ENCODE measurements at regions of chr18 and their contacts with region 1.

Region 1: DNA sequence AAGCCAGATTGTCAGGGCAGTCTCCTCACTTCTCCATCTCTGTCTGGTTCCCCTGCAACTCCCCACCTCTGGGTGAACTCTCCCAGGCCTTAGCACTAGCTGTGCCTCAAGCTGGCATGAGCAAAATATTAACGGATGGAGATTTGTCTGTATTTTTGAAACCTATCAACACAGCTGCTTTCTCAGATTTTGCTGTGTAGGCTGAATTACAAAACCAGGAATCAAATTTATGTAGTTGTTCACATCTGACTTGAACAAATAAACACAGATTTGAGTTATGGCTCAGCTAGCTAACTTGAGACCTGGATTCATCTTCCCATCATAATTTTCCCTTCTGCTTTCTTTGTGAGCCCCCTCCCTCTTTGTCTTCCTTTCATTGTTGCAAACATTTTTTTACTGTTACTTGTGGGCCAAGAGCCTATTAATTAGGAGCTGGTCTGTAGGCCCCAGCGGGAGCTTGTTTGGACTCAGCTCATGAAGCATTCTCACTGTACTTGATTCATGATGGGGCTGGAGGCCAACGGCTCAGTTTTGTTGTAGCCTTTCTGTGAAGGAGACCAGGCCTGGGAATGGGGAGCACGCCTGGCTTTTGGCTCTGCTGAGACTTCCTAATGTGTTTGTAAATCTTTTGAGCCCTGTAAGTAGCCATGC is 164.1 kb upstream of the GATA6 start:
- DNase-seq: no peak
- ATAC-seq: peak in 3 of 8 donors; percentile 46 to 69 (median 47)
- H3K4me3 ChIP-seq: no peak overlapping the region
- H3K27ac ChIP-seq: peak overlapping the region in 2 of 10 donors; percentile 37 to 47
- H3K4me1 ChIP-seq: peaks cover 0 to 9% (median under 1%) of the 10 kb centered on the region in 9 donors
- H3K27me3 ChIP-seq: no peaks in the 10 kb centered on the region
- CTCF ChIP-seq: no peak

Region 2: GRCh38 chr18:22084547-22084946 is 79.2 kb after region 1 on chr18:
- intact Hi-C with region 1: loop called in 1 of 10 experiments (anchors 10 kb)
- DNase-seq: peak in 1 of 2 donors; percentile 71
- ATAC-seq: peak; percentile 51 to 88 (median 82)
- H3K4me3 ChIP-seq: no peak overlapping the region
- H3K27ac ChIP-seq: peak overlapping the region in 6 of 10 donors; percentile 23 to 83 (median 80)
- H3K4me1 ChIP-seq: peaks cover 0 to 27% (median 9%) of the 10 kb centered on the region in 9 donors
- H3K27me3 ChIP-seq: no peaks in the 10 kb centered on the region
- CTCF ChIP-seq: no peak

Region 3: DNA sequence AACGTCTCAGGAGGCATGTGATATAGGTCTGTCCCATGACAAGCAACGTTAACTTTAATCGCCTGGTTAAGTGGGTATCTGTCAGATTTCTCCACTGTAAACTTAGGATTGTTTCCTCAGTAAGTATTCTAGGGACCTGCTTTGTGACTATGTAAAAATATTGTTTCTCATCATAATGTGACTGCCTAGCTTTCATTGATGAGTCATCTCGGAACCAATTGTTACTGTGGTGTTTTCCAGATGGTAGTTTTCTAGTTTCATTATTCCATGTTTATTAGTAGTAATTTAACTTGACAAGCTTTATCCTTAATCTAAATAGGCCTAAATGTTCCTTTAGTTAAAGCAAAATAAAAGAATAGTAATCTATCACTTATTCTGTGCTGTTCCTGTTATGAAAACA is 135.9 kb after region 1 on chr18:
- intact Hi-C with region 1: loop called in 1 of 10 experiments (anchors 10 kb)
- DNase-seq: no peak
- ATAC-seq: no peak
- H3K4me3 ChIP-seq: no peak overlapping the region
- H3K27ac ChIP-seq: no peak overlapping the region
- H3K4me1 ChIP-seq: no peaks in the 10 kb centered on the region
- H3K27me3 ChIP-seq: no peaks in the 10 kb centered on the region
- CTCF ChIP-seq: no peak

Region 4: GRCh38 chr18:22152134-22152533 is 146.8 kb after region 1 on chr18:
- intact Hi-C with region 1: loop called in 2 of 10 experiments (anchors 10 kb)
- DNase-seq: no peak
- ATAC-seq: peak in 1 of 8 donors; percentile 31
- H3K4me3 ChIP-seq: no peak overlapping the region
- H3K27ac ChIP-seq: no peak overlapping the region
- H3K4me1 ChIP-seq: no peaks in the 10 kb centered on the region
- H3K27me3 ChIP-seq: no peaks in the 10 kb centered on the region
- CTCF ChIP-seq: no peak

Region 5: GRCh38 chr18:22241921-22242361 is 236.6 kb after region 1 on chr18:
- intact Hi-C with region 1: loop called in 1 of 10 experiments (anchors 10 kb)
- DNase-seq: no peak
- ATAC-seq: no peak
- H3K4me3 ChIP-seq: no peak overlapping the region
- H3K27ac ChIP-seq: no peak overlapping the region
- H3K4me1 ChIP-seq: no peaks in the 10 kb centered on the region
- H3K27me3 ChIP-seq: no peaks in the 10 kb centered on the region
- CTCF ChIP-seq: no peak

Measured in heart right ventricle (tissue), 16 donors.